Right ventricle myocardium inferior (tissue), 1 donor: ENCODE measurements at regions of chr11 and their contacts with region 1.

Region 1: DNA sequence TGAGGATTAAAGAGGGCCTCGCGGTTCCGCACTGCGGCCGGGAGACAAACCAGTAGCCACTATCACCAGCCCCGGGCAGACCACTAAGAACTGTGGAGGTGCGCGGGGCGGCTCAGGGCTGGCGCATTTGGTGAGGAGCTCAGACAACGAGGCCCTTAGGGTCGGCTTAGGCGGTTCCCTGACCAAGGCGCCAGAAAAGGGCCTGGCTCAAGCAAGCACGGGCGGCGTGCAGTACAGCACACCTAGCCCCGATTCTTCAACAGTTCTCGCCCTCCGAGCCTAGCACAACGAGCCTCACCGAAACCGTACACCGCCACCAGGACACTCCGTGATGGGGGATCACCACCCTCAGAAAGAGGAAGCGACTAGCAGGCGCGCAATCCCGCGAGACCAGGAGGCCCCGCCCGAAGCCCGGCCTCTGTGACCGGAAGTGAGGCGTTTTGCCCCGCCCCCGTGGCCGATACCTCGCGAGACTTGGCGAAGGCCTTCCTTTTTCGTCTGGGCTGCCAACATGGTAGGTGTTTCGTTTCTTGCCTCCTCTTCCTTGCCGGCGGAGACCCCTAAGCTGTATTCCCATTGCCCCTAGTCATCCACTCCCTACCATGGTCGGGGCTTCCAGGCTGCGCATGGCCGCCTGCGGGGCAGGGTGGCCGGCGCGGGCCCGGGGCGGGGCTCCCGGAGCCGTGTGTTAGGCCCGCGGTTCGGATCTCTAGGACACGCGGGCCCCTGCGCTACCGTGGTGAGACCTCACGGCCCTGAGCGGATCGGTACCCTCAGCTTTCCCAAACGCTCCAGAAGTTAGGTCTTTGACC is at the starts of genes RPL27A and TRIM66:
- DNase-seq: peak; percentile 99
- ATAC-seq: peak; percentile 98
- total RNA-seq, gene RPL27A: 679 TPM
- total RNA-seq, gene TRIM66: 3.5 TPM

Region 2: DNA sequence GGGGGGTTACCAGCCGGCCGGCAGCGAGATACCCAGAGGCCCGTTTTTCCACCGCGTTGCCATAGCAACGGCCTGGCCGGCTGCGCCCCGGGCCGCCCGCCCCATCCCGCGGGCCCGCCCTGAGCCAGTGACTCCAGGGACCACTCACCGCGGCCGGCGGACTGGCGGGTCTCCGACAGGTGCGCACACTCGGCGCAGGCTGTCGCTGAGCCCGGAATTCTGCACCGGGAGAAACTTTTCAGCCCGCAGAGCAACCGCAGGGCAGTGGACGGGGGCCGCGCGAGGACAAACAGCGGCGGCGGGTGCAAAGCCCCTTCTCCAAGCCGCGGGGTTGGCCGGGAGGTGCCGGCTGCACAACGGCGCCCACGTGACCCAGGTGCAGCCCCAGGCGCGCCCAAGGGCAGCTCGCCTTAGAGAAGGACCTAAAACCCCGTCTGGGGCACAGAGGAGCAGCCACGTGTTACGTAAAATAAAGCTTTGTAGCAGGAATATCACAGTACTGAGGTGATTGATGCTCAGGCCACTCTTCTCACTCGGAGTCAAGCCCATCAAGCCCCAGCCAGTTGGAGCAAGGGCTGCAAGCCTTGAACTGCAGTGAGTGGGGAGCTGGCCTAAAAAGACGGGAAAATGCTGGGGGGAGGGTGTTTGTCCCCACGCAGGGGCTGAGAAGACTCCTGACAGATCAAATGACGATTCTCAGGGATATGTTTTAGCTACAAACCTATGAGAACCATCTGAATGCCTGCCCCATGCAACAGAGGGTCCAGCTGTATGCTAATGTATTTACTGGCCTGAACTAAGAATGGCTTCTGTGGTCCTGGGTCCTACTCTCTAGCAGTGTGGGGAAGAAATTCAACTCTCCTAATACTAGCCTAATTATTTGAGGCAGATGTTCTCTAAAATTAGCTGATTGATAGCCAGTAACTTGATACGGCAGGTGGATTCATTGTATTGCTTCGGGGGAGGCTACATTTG is 88.3 kb before region 1 on chr11 and contains the start of gene STK33:
- intact Hi-C with region 1: loop called (anchors 5 kb)
- DNase-seq: peak; percentile 81
- ATAC-seq: peak; percentile 93
- total RNA-seq, gene STK33: 23.9 TPM

Region 3: GRCh38 chr11:8813658-8814057 is 131.1 kb after region 1 on chr11:
- intact Hi-C with region 1: loop called (anchors 1 kb)
- DNase-seq: peak; percentile 77
- ATAC-seq: peak; percentile 60

Region 4: GRCh38 chr11:8911029-8911826 is 228.7 kb after region 1 on chr11 and contains the start of gene AKIP1:
- intact Hi-C with region 1: loop called (anchors 5 kb)
- DNase-seq: peak; percentile 98
- ATAC-seq: peak; percentile 97
- total RNA-seq, gene AKIP1: 23.3 TPM

Region 5: DNA sequence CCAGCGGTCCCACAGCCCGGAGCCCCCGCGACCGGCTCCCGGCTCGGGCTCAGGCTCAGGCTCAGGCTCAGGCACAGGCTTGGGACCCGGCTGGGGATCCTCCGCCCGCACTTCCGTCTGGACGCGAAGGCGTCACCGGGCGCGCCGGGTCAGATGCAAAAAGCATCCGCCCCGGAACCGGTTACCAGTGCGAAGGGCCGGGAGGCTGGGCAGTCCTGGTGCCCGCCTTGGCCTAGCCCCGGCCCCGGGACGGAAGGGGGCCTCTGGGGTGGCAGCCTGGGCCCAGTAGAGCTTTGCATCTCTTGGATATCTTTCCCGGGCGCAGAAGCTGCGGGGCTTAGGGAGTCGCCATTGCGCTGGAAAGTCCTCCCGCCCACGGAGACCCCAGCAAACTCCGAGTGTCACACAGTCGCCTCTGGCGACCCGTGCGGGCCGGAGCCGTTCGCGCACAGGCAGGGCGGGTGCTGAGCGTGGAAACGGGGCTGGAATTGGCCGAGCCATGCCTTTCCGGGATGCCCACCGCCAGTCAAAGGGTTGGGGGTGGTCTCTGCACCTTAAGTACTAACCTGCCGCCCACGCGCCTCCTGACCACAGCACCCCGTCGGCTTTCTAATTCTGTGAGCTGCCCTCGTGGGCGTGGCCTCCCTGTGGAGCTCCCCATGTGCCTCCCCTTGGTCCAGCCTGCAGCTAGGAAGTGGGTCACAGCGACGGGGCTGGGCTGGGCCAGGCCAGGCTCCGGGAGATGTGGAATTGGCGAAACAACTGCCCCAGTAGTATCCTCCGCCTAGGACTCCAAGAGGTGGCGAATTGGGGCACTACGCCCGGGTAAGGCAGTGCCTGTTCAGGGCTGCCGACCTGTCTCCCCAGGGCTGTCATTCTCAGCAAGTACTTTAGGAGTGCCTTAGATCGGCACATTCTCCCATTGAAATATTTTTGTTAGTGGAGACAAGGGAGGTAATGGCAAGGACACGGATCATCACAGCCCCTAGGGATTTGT is 282.1 kb after region 1 on chr11 and contains the start of gene TMEM9B:
- intact Hi-C with region 1: loop called (anchors 1 kb)
- DNase-seq: peak; percentile 96
- ATAC-seq: peak; percentile 97
- total RNA-seq, gene TMEM9B: 46.1 TPM